Lower leg skin (tissue), 4 donors: ENCODE measurements at regions of chr21 and their contacts with region 1.

Region 1: GRCh38 chr21:36193207-36193606 is 36.6 kb downstream of the DOP1B start:
- DNase-seq: peak in 1 of 2 donors; percentile 30
- H3K4me3 ChIP-seq: no peak overlapping the region
- CTCF ChIP-seq: no peak
- POLR2A ChIP-seq: no peak

Region 2: GRCh38 chr21:36246080-36246631 is 52.9 kb after region 1 on chr21:
- intact Hi-C with region 1: loop called (anchors 10 kb)
- DNase-seq: peak in 1 of 2 donors; percentile 32
- H3K4me3 ChIP-seq: no peak overlapping the region
- CTCF ChIP-seq: no peak
- POLR2A ChIP-seq: no peak

Region 3: GRCh38 chr21:36847171-36847570 is 654.0 kb after region 1 on chr21:
- intact Hi-C with region 1: no loop called
- DNase-seq: no peak
- H3K4me3 ChIP-seq: no peak overlapping the region
- CTCF ChIP-seq: no peak
- POLR2A ChIP-seq: no peak